ENCODE measurements at regions of chr2 and their contacts with region 1.

Region 1: GRCh38 chr2:191486584-191487320 is 191.2 kb upstream of the NABP1 start:
- DNase-seq: peak in 1 of 6 donors; percentile 26
- ATAC-seq: peak in 3 of 4 donors; percentile 55 to 87 (median 77)
- H3K4me3 ChIP-seq: no peak overlapping the region
- H3K27ac ChIP-seq: no peak overlapping the region
- H3K4me1 ChIP-seq: peaks cover 3 to 10% (median 9%) of the 10 kb centered on the region in 3 donors
- H3K27me3 ChIP-seq: no peaks in the 10 kb centered on the region
- CTCF ChIP-seq: no peak

Region 2: GRCh38 chr2:191410646-191411436 is 75.9 kb before region 1 on chr2:
- intact Hi-C with region 1: loop called in 1 of 3 experiments (anchors 10 kb)
- DNase-seq: no peak
- ATAC-seq: no peak
- H3K4me3 ChIP-seq: no peak overlapping the region
- H3K27ac ChIP-seq: no peak overlapping the region
- H3K4me1 ChIP-seq: peaks cover 0 to 13% (median 6%) of the 10 kb centered on the region in 3 donors
- H3K27me3 ChIP-seq: no peaks in the 10 kb centered on the region
- CTCF ChIP-seq: no peak